T-cell (primary cell): ENCODE measurements at regions of chr2 and their contacts with region 1.

Region 1: GRCh38 chr2:73828818-73829570 is at the start of gene STAMBP:
- DNase-seq: peak; percentile 75 to 97 (median 83)
- ATAC-seq: peak; percentile 91 to 95 (median 94)
- H3K4me3 ChIP-seq: peak within 1 kb of the TSS; percentile 76 to 83
- H3K4me3 Mint-ChIP-seq: peak within 1 kb of the TSS; percentile 95 to 97 (median 96)
- H3K27ac ChIP-seq: peak within 1 kb of the TSS; percentile 94
- H3K27ac Mint-ChIP-seq: peak within 1 kb of the TSS; percentile 97 to 98
- H3K4me1 ChIP-seq: peaks cover 11 to 24% of the 10 kb centered on the region in 2 experiments
- H3K4me1 Mint-ChIP-seq: peaks cover 51 to 53% (median 52%) of the 10 kb centered on the region in 3 donors
- H3K27me3 ChIP-seq: no peaks in the 10 kb centered on the region
- H3K27me3 Mint-ChIP-seq: no peaks in the 10 kb centered on the region
- total RNA-seq, gene STAMBP: 21.6 to 32.5 (median 28.9) TPM

Region 2: DNA sequence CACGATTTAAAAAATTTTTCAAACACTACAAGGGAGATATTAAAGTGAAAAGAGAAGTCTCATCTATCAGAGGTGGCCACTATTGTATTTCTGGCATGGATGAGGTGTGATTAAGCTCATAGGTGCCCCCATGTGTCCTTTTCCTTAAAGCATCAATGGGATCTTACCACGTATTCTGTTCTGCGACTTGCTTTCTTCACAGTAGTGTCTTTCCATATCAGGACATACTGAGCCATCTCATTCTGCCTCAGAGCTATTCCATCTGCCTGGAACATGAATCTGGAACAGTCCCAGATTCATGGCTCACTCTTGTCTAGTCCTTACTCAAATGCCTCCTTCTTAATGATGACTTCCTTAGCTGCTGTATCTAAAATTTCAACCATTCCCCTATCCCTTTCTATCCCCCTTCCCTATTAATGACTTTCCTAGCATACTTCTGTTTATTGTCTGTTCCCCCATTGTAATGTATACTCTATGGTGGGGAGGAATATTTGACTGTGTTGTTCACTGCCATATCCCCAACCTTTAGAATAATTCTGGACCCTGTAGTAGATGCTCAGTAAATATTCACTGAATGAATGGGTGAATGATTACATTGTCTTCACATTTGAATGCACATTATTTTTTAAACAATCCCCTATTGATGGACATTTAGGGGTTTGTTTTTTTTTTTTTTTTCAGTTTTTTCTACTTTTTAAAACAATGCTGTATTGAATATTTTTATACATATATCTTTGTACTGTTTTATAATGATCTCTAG is 10.8 kb after region 1 on chr2:
- CTCF ChIA-PET with region 1: interaction called, 3 to 15 read pairs
- POLR2A ChIA-PET with region 1: no interaction called
- DNase-seq: peak in 1 of 35 experiments; percentile 8
- ATAC-seq: no peak
- H3K4me3 ChIP-seq: no peak overlapping the region
- H3K4me3 Mint-ChIP-seq: no peak overlapping the region
- H3K27ac ChIP-seq: no peak overlapping the region
- H3K27ac Mint-ChIP-seq: no peak overlapping the region
- H3K4me1 ChIP-seq: no peaks in the 10 kb centered on the region
- H3K4me1 Mint-ChIP-seq: peaks cover 12 to 28% (median 22%) of the 10 kb centered on the region in 3 donors
- H3K27me3 ChIP-seq: no peaks in the 10 kb centered on the region
- H3K27me3 Mint-ChIP-seq: no peaks in the 10 kb centered on the region

Region 3: DNA sequence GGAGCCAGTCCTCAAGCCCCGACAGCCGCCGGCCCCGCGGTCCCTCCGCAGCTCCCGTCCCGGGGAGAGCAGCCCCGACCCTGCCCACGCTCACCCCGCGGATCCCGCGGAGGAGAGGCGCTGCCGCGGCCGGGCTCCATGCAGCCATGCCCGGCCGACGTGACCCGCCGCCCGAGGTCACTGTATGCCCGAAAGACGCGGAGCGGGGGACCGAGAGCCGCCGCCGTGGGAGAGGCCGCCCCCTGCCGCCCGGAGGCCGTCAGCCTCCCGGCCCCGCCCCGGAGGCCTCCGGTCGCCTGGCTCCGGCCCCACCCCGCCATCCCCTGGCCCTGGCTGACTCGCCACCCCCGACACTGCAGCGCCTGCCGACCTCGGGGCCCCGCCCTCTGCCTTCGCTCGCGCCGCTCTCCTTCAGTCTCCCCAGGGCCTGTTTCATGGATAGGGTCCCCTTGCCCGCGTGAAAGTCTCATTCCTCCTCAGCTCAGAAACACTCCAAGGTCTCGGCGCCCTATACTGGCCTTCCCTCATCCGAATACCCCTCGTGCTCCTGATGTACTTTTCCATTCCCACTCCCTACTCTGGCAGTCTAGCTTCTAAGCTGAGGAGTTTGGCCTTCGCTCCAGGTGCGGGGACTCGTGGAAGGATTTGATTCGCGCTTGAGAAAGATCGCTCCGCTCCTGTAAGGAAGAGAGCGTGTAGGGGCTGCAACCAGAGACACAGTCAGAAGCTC is 318.9 kb after region 1 on chr2 and contains the start of gene BOLA3:
- CTCF ChIA-PET with region 1: interaction called, 4 to 17 read pairs
- POLR2A ChIA-PET with region 1: interaction called in 1 of 2 experiments, 6 read pairs
- DNase-seq: peak; percentile 38 to 84 (median 63)
- ATAC-seq: peak; percentile 90 to 98 (median 97)
- H3K4me3 ChIP-seq: peak within 1 kb of the TSS; percentile 64 to 70
- H3K4me3 Mint-ChIP-seq: no peak within 1 kb of the TSS
- H3K27ac ChIP-seq: peak within 1 kb of the TSS; percentile 64
- H3K27ac Mint-ChIP-seq: no peak within 1 kb of the TSS
- H3K4me1 ChIP-seq: peaks cover 6 to 26% of the 10 kb centered on the region in 2 experiments
- H3K4me1 Mint-ChIP-seq: peaks cover 0 to 5% (median 0%) of the 10 kb centered on the region in 3 donors
- H3K27me3 ChIP-seq: no peaks in the 10 kb centered on the region
- H3K27me3 Mint-ChIP-seq: no peaks in the 10 kb centered on the region
- total RNA-seq, gene BOLA3: 13.7 to 16.0 (median 15.5) TPM

Region 4: GRCh38 chr2:74391580-74392448 is 562.8 kb after region 1 on chr2:
- CTCF ChIA-PET with region 1: interaction called in 1 of 2 experiments, 11 read pairs
- POLR2A ChIA-PET with region 1: no interaction called
- DNase-seq: peak; percentile 87 to 98 (median 94)
- ATAC-seq: peak; percentile 88 to 92 (median 90)
- H3K4me3 ChIP-seq: peak overlapping the region; percentile 62 to 67
- H3K4me3 Mint-ChIP-seq: peak overlapping the region in 1 of 3 donors; percentile 97
- H3K27ac ChIP-seq: peak overlapping the region; percentile 90
- H3K27ac Mint-ChIP-seq: peak overlapping the region; percentile 99 to 100
- H3K4me1 ChIP-seq: peaks cover 14 to 16% of the 10 kb centered on the region in 2 experiments
- H3K4me1 Mint-ChIP-seq: peaks cover 0 to 6% (median 4%) of the 10 kb centered on the region in 3 donors
- H3K27me3 ChIP-seq: peaks cover 0 to 4% of the 10 kb centered on the region in 2 experiments
- H3K27me3 Mint-ChIP-seq: peaks cover 0 to 7% of the 10 kb centered on the region in 2 donors